CD8-positive, alpha-beta T cell (primary cell): ENCODE measurements at regions of chr14 and their contacts with region 1.

Region 1: DNA sequence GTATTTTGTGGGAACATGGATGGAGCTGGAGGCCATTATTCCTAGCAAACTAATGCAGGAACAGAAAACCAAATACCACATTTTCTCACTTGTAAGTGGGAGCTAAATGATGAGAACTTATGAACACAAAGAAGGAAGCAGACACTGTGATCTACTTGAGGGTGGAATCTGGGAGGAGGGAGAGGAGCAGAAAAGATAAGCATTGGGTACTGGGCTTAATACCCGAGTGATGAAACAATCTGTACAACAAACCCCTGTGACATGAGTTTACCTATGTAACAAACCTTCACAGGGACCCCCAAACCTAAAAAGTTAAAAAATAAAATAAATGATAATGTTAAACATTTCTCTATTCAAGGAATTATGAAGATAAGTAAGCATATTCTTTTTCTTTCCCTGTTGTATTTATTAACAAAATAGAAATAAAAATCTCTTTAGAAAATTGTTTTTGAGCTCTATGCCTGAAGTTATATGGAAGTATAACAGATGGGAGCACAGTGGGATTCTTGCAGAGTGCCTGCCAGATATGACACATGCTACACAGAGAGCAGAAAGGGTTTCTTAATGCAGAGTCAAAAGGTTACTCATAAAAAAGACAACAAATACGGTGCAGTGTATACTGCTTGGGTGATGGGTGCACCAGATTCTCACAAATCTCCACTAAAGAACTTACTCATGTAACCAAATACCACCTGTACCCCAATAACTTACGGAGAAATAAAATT is 52.0 kb upstream of the SYNE2 start:
- DNase-seq: no peak
- ATAC-seq: no peak
- H3K4me3 ChIP-seq: no peak overlapping the region
- H3K4me3 Mint-ChIP-seq: no peak overlapping the region
- H3K27ac ChIP-seq: no peak overlapping the region
- H3K27ac Mint-ChIP-seq: no peak overlapping the region
- H3K4me1 ChIP-seq: no peaks in the 10 kb centered on the region
- H3K4me1 Mint-ChIP-seq: peaks cover 2% of the 10 kb centered on the region
- H3K27me3 ChIP-seq: no peaks in the 10 kb centered on the region
- H3K27me3 Mint-ChIP-seq: no peaks in the 10 kb centered on the region
- CTCF ChIP-seq: no peak

Region 2: DNA sequence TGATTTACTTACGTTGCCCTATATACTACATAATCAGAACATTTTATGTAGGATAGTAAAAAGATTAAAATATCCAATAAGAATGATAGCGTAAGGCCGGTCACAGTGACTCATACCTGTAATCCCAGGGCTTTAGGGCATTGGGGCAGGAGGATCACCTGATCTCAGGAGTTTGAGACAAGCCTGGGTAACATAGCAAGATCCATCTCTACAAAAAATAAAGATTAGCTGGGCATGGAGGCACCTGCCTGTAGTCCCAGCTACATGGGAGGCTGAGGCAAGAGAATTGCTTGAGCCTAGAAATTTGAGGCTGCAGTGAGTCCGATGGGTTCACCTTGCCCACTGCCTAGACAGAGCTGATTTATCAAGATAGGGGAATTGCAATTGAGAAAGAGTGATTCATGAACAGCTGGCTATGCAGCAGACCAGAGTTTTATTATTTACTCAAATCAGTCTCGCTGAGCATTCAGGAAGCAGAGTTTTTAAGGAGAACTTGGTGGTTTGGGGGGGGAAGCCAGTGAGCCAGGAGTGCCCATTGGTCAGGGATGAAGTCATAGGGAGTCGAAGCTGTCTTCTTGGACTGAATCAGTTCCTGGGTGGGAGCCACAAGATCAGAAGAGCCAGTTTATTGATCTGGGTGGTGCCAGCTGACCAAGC is 48.2 kb before region 1 on chr14:
- CTCF ChIA-PET with region 1: no interaction called
- POLR2A ChIA-PET with region 1: no interaction called
- intact Hi-C with region 1: no loop called
- DNase-seq: no peak
- ATAC-seq: no peak
- H3K4me3 ChIP-seq: no peak overlapping the region
- H3K4me3 Mint-ChIP-seq: no peak overlapping the region
- H3K27ac ChIP-seq: no peak overlapping the region
- H3K27ac Mint-ChIP-seq: no peak overlapping the region
- H3K4me1 ChIP-seq: no peaks in the 10 kb centered on the region
- H3K4me1 Mint-ChIP-seq: no peaks in the 10 kb centered on the region
- H3K27me3 ChIP-seq: peaks cover 0 to 2% of the 10 kb centered on the region in 2 experiments
- H3K27me3 Mint-ChIP-seq: no peaks in the 10 kb centered on the region
- CTCF ChIP-seq: no peak

Region 3: DNA sequence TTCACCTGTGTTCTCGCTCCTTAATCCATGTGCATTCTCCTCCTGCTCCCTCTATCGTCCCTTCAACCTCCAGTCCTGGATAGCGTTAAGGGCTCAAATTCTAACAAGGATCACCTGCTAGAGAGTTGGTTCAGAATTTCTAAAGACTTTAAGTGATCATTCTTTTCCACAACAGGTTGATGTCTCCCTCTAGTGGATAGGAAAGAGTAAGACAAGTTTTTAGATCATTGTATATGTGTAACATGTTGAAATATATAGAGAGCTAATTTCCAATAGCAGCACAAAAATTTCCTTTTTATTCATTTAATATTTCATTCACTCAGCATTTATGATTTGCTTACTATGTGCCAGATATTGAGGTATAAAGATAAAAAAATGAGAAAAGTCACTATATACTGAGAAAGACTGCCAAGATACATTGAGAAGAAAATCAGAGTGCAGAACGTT is 502.7 kb after region 1 on chr14:
- CTCF ChIA-PET with region 1: interaction called, 32 read pairs
- POLR2A ChIA-PET with region 1: no interaction called
- intact Hi-C with region 1: loop called in 1 of 2 experiments (anchors 1 kb)
- DNase-seq: peak in 2 of 9 experiments; percentile 53 to 66
- ATAC-seq: peak; percentile 68
- H3K4me3 ChIP-seq: no peak overlapping the region
- H3K4me3 Mint-ChIP-seq: no peak overlapping the region
- H3K27ac ChIP-seq: no peak overlapping the region
- H3K27ac Mint-ChIP-seq: no peak overlapping the region
- H3K4me1 ChIP-seq: no peaks in the 10 kb centered on the region
- H3K4me1 Mint-ChIP-seq: no peaks in the 10 kb centered on the region
- H3K27me3 ChIP-seq: no peaks in the 10 kb centered on the region
- H3K27me3 Mint-ChIP-seq: peaks cover 4% of the 10 kb centered on the region
- CTCF ChIP-seq: peak; percentile 92